Adrenal gland (tissue), 19 donors: ENCODE measurements at regions of chr17 and their contacts with region 1.

Region 1: GRCh38 chr17:48577946-48578615 is at the start of gene HOXB4:
- DNase-seq: peak; percentile 73 to 90 (median 85)
- H3K4me3 ChIP-seq: peak within 1 kb of the TSS in 3 of 4 donors; percentile 45 to 85 (median 62)
- H3K27ac ChIP-seq: peak within 1 kb of the TSS in 3 of 5 donors; percentile 45 to 87 (median 83)
- H3K4me1 ChIP-seq: peaks cover 3 to 24% of the 10 kb centered on the region in 2 donors
- H3K27me3 ChIP-seq: no peaks in the 10 kb centered on the region
- CTCF ChIP-seq: no peak
- POLR2A ChIP-seq: peak in 1 of 2 donors; percentile 14
- total RNA-seq, gene HOXB4: 1.7 to 9.8 (median 2.9) TPM

Region 2: DNA sequence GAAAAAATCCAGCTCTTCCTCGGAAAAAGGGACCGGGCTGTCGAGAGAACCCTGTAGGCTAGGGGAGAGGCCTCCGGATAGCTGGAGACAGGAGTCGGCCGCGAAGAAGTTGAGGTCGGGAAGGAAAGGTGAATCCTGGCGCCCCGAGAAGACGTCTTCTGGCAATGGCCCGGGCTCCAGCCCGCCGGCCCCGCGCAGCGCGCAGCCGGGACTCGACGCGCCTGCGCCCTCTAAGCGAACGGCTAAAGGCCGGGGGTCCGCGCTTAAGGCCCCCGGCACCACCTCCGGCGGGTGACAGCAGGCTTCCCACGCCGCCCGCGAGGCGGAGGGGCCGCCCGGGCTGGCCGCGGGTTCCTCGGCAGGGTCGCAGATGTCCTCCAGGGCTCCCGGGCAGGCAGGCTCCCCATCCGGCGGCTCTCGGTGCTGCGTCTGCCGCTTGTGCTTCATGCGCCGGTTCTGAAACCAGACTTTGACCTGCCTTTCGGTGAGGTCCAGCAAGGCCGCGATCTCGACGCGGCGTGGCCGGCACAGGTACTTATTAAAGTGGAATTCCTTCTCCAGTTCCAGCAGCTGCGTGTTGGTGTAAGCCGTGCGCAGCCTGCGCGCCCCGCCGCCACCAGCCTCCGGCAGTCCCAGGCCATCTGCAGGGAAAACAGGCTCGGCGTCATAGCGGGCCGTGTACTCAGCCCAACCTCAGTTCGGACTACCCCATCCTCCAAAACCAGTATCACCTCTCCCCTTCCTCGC is 34.8 kb before region 1 on chr17:
- intact Hi-C with region 1: loop called (anchors 5 kb)
- DNase-seq: peak in 6 of 7 donors; percentile 48 to 79 (median 58)
- H3K4me3 ChIP-seq: peak overlapping the region in 3 of 4 donors; percentile 33 to 78 (median 58)
- H3K27ac ChIP-seq: peak overlapping the region; percentile 72 to 97 (median 85)
- H3K4me1 ChIP-seq: peaks cover 20 to 30% of the 10 kb centered on the region in 2 donors
- H3K27me3 ChIP-seq: no peaks in the 10 kb centered on the region
- CTCF ChIP-seq: peak in 4 of 6 experiments; percentile 28 to 33 (median 32)
- POLR2A ChIP-seq: peak in 1 of 2 donors; percentile 51

Region 3: GRCh38 chr17:50346313-50347116 is 1768.4 kb after region 1 on chr17:
- intact Hi-C with region 1: no loop called
- DNase-seq: peak; percentile 33 to 65 (median 49)
- H3K4me3 ChIP-seq: peak overlapping the region in 3 of 4 donors; percentile 68 to 97 (median 75)
- H3K27ac ChIP-seq: peak overlapping the region in 1 of 5 donors; percentile 68
- H3K4me1 ChIP-seq: peaks cover 14 to 20% of the 10 kb centered on the region in 2 donors
- H3K27me3 ChIP-seq: no peaks in the 10 kb centered on the region
- CTCF ChIP-seq: no peak
- POLR2A ChIP-seq: no peak